Cardiac septum (tissue), 1 donor: ENCODE measurements at regions of chr14 and their contacts with region 1.

Region 1: DNA sequence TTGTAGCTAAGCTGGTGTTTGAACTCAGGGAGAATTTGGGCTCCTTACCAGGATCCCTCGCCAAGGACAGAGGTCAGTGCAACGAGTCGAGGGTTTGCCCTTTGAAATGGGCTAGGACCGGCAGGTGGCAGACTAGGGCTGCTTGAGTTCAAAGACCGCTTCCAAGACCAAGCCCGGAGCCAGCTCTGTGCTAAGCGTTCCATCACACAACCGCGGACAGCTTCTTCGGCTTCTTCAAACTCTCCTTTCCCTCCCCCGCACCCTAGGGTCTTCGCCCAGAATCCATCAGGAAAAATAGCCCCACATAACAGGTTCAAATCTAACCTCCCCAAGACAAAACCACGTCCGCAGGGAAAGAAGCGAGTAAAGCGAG is 705 bp upstream of the FLVCR2 start:
- DNase-seq: peak; percentile 91

Region 2: GRCh38 chr14:75123993-75124392 is 453.7 kb before region 1 on chr14:
- intact Hi-C with region 1: no loop called
- DNase-seq: no peak

Region 3: DNA sequence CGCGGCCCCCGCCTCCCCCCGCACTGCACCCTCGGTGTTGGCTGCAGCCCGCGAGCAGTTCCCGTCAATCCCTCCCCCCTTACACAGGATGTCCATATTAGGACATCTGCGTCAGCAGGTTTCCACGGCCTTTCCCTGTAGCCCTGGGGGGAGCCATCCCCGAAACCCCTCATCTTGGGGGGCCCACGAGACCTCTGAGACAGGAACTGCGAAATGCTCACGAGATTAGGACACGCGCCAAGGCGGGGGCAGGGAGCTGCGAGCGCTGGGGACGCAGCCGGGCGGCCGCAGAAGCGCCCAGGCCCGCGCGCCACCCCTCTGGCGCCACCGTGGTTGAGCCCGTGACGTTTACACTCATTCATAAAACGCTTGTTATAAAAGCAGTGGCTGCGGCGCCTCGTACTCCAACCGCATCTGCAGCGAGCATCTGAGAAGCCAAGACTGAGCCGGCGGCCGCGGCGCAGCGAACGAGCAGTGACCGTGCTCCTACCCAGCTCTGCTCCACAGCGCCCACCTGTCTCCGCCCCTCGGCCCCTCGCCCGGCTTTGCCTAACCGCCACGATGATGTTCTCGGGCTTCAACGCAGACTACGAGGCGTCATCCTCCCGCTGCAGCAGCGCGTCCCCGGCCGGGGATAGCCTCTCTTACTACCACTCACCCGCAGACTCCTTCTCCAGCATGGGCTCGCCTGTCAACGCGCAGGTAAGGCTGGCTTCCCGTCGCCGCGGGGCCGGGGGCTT is 299.1 kb before region 1 on chr14 and contains the start of gene FOS:
- intact Hi-C with region 1: no loop called
- DNase-seq: peak; percentile 98
- total RNA-seq, gene FOS: 25.8 TPM

Region 4: GRCh38 chr14:75654127-75654732 is 76.5 kb after region 1 on chr14:
- intact Hi-C with region 1: loop called (anchors 1 kb)
- DNase-seq: peak; percentile 89